Caco-2 (cell line): ENCODE measurements at regions of chr5 and their contacts with region 1.

Region 1: GRCh38 chr5:174724491-174725260 is at the start of gene MSX2:
- DNase-seq: peak; percentile 93 to 95
- H3K4me3 ChIP-seq: peak within 1 kb of the TSS; percentile 94
- H3K4me3 Mint-ChIP-seq: peak within 1 kb of the TSS; percentile 93
- H3K27ac Mint-ChIP-seq: peak within 1 kb of the TSS; percentile 91
- H3K4me1 ChIP-seq: peaks cover 54% of the 10 kb centered on the region
- H3K4me1 Mint-ChIP-seq: peaks cover 45% of the 10 kb centered on the region
- H3K27me3 ChIP-seq: no peaks in the 10 kb centered on the region
- H3K27me3 Mint-ChIP-seq: no peaks in the 10 kb centered on the region
- CTCF ChIP-seq: no peak
- total RNA-seq, gene MSX2: 59.7 and 64.4 TPM in 2 replicates

Region 2: GRCh38 chr5:174464504-174465165 is 260.0 kb before region 1 on chr5:
- CTCF ChIA-PET with region 1: interaction called, 4 read pairs
- POLR2A ChIA-PET with region 1: no interaction called
- intact Hi-C with region 1: loop called (anchors 5 kb)
- DNase-seq: no peak
- H3K4me3 ChIP-seq: no peak overlapping the region
- H3K4me3 Mint-ChIP-seq: no peak overlapping the region
- H3K27ac Mint-ChIP-seq: no peak overlapping the region
- H3K4me1 ChIP-seq: peaks cover 44% of the 10 kb centered on the region
- H3K4me1 Mint-ChIP-seq: peaks cover 35% of the 10 kb centered on the region
- H3K27me3 ChIP-seq: no peaks in the 10 kb centered on the region
- H3K27me3 Mint-ChIP-seq: no peaks in the 10 kb centered on the region
- CTCF ChIP-seq: peak; percentile 32 to 51

Region 3: GRCh38 chr5:174599992-174600391 is 124.7 kb before region 1 on chr5:
- CTCF ChIA-PET with region 1: interaction called, 20 read pairs
- POLR2A ChIA-PET with region 1: interaction called, 6 read pairs
- intact Hi-C with region 1: no loop called
- DNase-seq: peak; percentile 55 to 66
- H3K4me3 ChIP-seq: no peak overlapping the region
- H3K4me3 Mint-ChIP-seq: peak overlapping the region; percentile 56
- H3K27ac Mint-ChIP-seq: peak overlapping the region; percentile 80
- H3K4me1 ChIP-seq: peaks cover 69% of the 10 kb centered on the region
- H3K4me1 Mint-ChIP-seq: peaks cover 38% of the 10 kb centered on the region
- H3K27me3 ChIP-seq: no peaks in the 10 kb centered on the region
- H3K27me3 Mint-ChIP-seq: no peaks in the 10 kb centered on the region
- CTCF ChIP-seq: peak in 1 of 2 experiments; percentile 20

Region 4: DNA sequence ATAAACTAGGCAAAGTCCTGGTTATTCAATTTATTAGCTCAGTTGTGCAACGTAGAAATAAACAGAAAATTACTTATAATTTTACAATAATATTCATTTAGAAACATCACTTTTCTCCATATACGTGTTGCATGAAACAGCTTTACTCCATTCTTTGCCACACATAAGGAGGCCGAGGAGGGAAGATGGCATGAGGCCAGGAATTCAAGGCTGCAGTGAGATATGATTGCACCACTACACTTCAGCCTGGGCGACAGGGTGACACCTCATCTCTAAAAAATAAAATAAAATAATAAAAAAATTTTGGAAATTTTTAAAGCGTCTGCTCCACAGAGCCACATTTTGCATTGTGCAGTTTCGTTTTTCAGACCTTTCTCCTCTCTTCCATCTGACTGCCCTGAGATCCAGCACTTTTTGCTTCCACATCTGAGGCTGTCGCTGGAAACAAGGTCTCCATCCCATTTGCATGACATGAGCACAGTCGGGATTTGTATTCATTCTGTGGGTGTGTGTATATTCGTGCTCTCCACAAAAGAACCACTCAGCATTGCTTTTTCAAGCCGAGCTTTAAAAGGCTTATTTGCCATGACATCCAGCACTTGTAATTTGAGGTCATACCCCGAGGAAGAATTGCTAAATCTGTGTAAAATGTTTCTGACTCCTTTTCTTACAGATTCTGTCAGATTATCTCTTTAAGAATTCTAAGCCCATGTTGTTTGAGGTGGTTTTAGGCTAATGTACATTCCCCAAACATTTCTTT is 98.9 kb before region 1 on chr5:
- CTCF ChIA-PET with region 1: interaction called, 5 read pairs
- POLR2A ChIA-PET with region 1: interaction called, 12 read pairs
- intact Hi-C with region 1: loop called (anchors 2 kb)
- DNase-seq: no peak
- H3K4me3 ChIP-seq: no peak overlapping the region
- H3K4me3 Mint-ChIP-seq: no peak overlapping the region
- H3K27ac Mint-ChIP-seq: peak overlapping the region; percentile 41
- H3K4me1 ChIP-seq: peaks cover 51% of the 10 kb centered on the region
- H3K4me1 Mint-ChIP-seq: peaks cover 49% of the 10 kb centered on the region
- H3K27me3 ChIP-seq: no peaks in the 10 kb centered on the region
- H3K27me3 Mint-ChIP-seq: no peaks in the 10 kb centered on the region
- CTCF ChIP-seq: no peak

Region 5: GRCh38 chr5:174693713-174694385 is 30.8 kb before region 1 on chr5:
- CTCF ChIA-PET with region 1: interaction called, 5 read pairs
- POLR2A ChIA-PET with region 1: interaction called, 3 read pairs
- intact Hi-C with region 1: loop called (anchors 1 kb)
- DNase-seq: peak; percentile 46 to 67
- H3K4me3 ChIP-seq: no peak overlapping the region
- H3K4me3 Mint-ChIP-seq: peak overlapping the region; percentile 84
- H3K27ac Mint-ChIP-seq: peak overlapping the region; percentile 88
- H3K4me1 ChIP-seq: peaks cover 37% of the 10 kb centered on the region
- H3K4me1 Mint-ChIP-seq: peaks cover 41% of the 10 kb centered on the region
- H3K27me3 ChIP-seq: no peaks in the 10 kb centered on the region
- H3K27me3 Mint-ChIP-seq: no peaks in the 10 kb centered on the region
- CTCF ChIP-seq: no peak

Region 6: GRCh38 chr5:174793684-174794328 is 69.1 kb after region 1 on chr5:
- CTCF ChIA-PET with region 1: no interaction called
- POLR2A ChIA-PET with region 1: no interaction called
- intact Hi-C with region 1: no loop called
- DNase-seq: peak; percentile 61 to 81
- H3K4me3 ChIP-seq: no peak overlapping the region
- H3K4me3 Mint-ChIP-seq: peak overlapping the region; percentile 13
- H3K27ac Mint-ChIP-seq: no peak overlapping the region
- H3K4me1 ChIP-seq: no peaks in the 10 kb centered on the region
- H3K4me1 Mint-ChIP-seq: peaks cover 7% of the 10 kb centered on the region
- H3K27me3 ChIP-seq: no peaks in the 10 kb centered on the region
- H3K27me3 Mint-ChIP-seq: no peaks in the 10 kb centered on the region
- CTCF ChIP-seq: peak; percentile 97 to 98

Region 7: GRCh38 chr5:175133185-175133584 is 408.5 kb after region 1 on chr5:
- CTCF ChIA-PET with region 1: no interaction called
- POLR2A ChIA-PET with region 1: no interaction called
- intact Hi-C with region 1: no loop called
- DNase-seq: peak in 1 of 2 experiments; percentile 10
- H3K4me3 ChIP-seq: no peak overlapping the region
- H3K4me3 Mint-ChIP-seq: no peak overlapping the region
- H3K27ac Mint-ChIP-seq: no peak overlapping the region
- H3K4me1 ChIP-seq: no peaks in the 10 kb centered on the region
- H3K4me1 Mint-ChIP-seq: no peaks in the 10 kb centered on the region
- H3K27me3 ChIP-seq: no peaks in the 10 kb centered on the region
- H3K27me3 Mint-ChIP-seq: peaks cover 3% of the 10 kb centered on the region
- CTCF ChIP-seq: no peak